Heart left ventricle (tissue), 16 donors: ENCODE measurements at regions of chr3 and their contacts with region 1.

Region 1: GRCh38 chr3:176514297-176514696 is 683.0 kb downstream of the TBL1XR1 start:
- DNase-seq: peak in 1 of 5 donors; percentile 8
- ATAC-seq: peak in 1 of 4 donors; percentile 28
- H3K4me3 ChIP-seq: no peak overlapping the region
- H3K27ac ChIP-seq: no peak overlapping the region
- H3K4me1 ChIP-seq: no peaks in the 10 kb centered on the region
- H3K27me3 ChIP-seq: no peaks in the 10 kb centered on the region
- CTCF ChIP-seq: peak in 11 of 12 donors; percentile 33 to 68 (median 53)
- POLR2A ChIP-seq: no peak

Region 2: DNA sequence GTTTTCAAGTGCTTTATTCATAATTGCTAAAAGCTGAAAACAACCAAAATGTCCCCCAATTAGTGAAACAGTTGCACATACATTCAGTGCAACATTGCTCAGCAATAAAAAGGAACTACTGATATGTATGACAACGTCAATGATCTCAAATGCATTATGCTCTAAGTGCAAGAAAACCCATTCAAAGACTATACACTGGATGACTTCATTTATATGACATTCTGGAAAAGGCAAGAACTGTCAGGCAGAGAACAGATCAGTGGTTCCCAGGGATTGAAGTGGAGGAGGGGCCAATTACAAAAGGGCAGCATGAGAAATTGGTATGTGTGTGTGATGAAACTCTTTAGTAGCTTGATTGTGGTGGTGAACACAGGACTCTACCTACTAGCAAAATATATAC is 97.4 kb after region 1 on chr3:
- intact Hi-C with region 1: no loop called
- DNase-seq: no peak
- ATAC-seq: no peak
- H3K4me3 ChIP-seq: no peak overlapping the region
- H3K27ac ChIP-seq: no peak overlapping the region
- H3K4me1 ChIP-seq: no peaks in the 10 kb centered on the region
- H3K27me3 ChIP-seq: no peaks in the 10 kb centered on the region
- CTCF ChIP-seq: no peak
- POLR2A ChIP-seq: no peak

Region 3: GRCh38 chr3:176814285-176814684 is 300.0 kb after region 1 on chr3:
- intact Hi-C with region 1: loop called in 2 of 10 experiments (anchors 10 kb)
- DNase-seq: peak; percentile 45 to 69 (median 57)
- ATAC-seq: peak; percentile 55 to 97 (median 90)
- H3K4me3 ChIP-seq: no peak overlapping the region
- H3K27ac ChIP-seq: no peak overlapping the region
- H3K4me1 ChIP-seq: peaks cover 0 to 7% (median 0%) of the 10 kb centered on the region in 12 donors
- H3K27me3 ChIP-seq: no peaks in the 10 kb centered on the region
- CTCF ChIP-seq: peak; percentile 31 to 70 (median 58)
- POLR2A ChIP-seq: no peak

Region 4: DNA sequence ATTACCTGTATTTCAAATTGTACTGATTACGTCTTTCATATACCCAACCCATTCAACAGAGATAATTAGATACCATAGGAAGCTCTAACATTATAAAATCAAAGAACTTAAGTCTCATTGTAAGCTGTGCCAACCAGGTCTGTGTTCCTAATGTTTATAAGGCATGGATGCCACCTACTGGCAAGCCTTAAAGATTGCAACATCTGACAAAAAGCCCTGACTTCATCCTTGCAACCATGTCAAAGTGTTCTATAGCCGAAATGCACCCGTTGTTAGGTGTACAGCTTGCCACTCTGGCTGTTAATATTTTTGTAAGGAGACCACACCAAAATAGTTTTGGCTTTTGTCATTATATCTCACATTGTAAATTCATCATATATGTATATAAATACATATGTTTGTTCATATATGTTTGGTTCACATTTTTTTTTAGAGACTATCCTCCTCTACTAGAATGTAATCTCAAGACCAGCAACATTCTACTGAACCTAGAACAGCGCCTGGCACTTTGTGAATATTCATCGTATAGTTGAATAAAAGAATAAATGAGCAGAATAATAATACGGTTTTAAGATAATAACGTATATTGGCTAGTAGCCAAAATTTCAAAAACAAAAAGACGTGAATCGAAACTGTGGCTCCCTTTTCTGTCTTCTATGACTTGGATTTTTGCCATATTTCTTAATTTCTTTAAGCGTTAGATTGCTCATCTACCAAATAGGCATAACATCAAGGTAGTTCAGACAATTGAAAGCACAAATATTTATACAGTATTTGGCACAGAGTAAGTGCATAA is 424.9 kb after region 1 on chr3:
- intact Hi-C with region 1: loop called in 5 of 10 experiments (anchors 5 to 10 kb)
- DNase-seq: peak in 2 of 5 donors; percentile 22 to 33
- ATAC-seq: peak; percentile 32 to 85 (median 79)
- H3K4me3 ChIP-seq: no peak overlapping the region
- H3K27ac ChIP-seq: no peak overlapping the region
- H3K4me1 ChIP-seq: peaks cover 0 to 5% (median 0%) of the 10 kb centered on the region in 12 donors
- H3K27me3 ChIP-seq: no peaks in the 10 kb centered on the region
- CTCF ChIP-seq: peak; percentile 55 to 87 (median 74)
- POLR2A ChIP-seq: no peak